Activated T-helper 1 cell treated with anti-CD3 and anti-CD28 coated beads, Interleukin-12 subunit alpha, Interleukin-12 subunit beta, Interleukin-2, Interleukin-4 antibody, amounts not matched to agents 30 ng/mL and 10 ng/mL and 1 ng/mL, durations not matched to agents 14 hours and 24 hours and 36 hours (primary cell): ENCODE measurements at regions of chr3 and their contacts with region 1.

Region 1: DNA sequence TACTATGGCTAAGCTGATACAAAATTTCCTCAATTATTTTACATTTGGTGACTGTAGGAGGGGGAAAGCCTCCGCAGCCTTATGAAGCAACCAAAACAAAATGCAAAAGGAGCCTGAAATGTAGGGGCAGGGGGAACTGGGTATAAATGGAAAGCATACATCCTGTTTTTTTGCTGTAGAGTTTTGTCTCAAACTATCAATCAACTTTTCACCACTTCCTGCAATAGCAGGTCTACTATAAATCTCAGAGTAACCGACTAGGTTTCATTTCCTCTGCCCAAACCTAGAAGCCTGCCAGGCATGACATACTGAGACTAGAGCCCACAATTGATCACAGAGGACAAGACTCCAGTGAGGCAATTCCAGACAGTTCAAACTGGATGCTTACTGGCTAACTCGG is 91.3 kb downstream of the SHQ1 start:
- DNase-seq: peak; percentile 38
- H3K4me3 Mint-ChIP-seq: peak overlapping the region; percentile 34
- H3K27ac Mint-ChIP-seq: peak overlapping the region; percentile 64
- H3K4me1 Mint-ChIP-seq: peaks cover 50% of the 10 kb centered on the region
- H3K27me3 Mint-ChIP-seq: no peaks in the 10 kb centered on the region

Region 2: DNA sequence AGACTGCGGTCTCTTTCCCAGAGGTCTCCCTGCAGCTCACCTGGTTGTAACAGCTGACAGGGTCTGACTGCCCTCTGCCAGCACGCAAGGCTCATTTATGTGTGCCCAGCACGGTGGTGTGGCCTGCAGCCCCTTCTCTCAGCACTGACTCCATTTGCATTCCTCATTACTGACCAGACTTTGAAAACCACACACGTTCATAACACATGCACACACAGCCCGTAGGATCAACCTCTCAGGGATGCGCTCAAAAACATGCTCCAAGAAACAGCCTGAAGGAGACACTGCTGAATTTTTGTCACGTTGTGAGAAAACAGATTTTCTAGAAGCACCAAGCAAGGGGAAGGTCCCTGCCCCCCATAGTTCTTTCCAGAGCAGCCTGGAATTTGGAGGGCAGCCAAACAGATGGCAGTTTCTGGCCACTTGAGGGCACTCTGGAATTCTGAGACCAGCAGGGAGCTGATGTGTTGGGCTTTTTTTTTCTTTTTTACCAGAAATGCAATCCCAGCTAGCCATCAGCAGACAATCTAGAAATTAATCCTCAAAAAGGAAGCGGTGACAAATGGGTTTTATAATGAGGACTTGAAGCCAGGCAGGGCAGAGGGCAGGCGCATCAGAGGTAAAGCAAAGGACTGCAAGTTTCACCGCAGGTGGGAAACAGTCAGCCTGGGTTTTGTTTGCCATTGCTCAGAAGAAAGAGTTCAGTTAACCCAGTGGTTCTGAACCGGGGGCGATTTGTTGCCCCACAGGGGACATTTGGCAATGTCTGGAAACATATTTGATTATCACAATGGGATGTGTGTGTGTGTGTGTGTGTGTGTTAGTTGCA is 801.4 kb before region 1 on chr3:
- intact Hi-C with region 1: loop called (anchors 5 kb)
- DNase-seq: no peak
- H3K4me3 Mint-ChIP-seq: no peak overlapping the region
- H3K27ac Mint-ChIP-seq: no peak overlapping the region
- H3K4me1 Mint-ChIP-seq: peaks cover 33% of the 10 kb centered on the region
- H3K27me3 Mint-ChIP-seq: no peaks in the 10 kb centered on the region

Region 3: DNA sequence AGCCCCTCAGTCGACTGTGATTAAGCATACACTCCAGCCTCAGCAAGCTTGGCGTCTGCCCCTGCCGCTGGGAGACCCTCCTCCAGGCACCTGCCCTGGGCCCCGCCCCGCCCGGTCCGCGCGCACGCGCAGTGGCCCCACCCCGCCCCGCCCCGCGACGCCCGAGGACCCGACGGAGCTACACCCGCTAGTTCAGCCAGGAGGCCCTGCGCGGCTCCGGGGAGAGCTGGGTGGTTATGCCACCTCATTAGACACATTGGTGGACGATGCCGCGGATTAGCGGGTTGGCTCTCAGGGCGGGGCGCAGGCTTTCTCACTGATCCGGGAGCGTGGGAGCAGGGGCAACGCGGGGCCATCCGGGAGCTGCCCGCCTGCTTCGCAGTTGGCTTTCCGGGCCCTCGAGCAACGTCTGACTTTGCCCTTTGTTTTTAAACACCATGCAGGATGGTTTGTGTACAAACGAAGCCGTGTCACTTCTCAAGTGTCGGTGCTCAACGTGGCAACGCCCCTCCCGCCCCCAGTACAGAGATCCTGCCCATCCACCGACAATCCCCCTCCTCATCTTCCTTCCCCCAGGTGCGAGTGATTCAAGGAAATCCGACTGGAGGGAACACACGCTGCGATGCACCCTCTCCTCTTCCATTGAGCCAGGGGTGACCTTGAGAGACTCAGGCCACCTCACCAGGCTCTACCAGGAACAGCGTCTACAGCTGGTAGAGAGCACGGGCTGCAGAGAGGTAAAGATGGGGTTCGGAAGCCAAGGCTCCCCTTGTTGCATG is 18.0 kb before region 1 on chr3:
- intact Hi-C with region 1: loop called (anchors 1 kb)
- DNase-seq: peak; percentile 61
- H3K4me3 Mint-ChIP-seq: peak overlapping the region; percentile 81
- H3K27ac Mint-ChIP-seq: peak overlapping the region; percentile 64
- H3K4me1 Mint-ChIP-seq: peaks cover 19% of the 10 kb centered on the region
- H3K27me3 Mint-ChIP-seq: no peaks in the 10 kb centered on the region

Region 4: GRCh38 chr3:72862314-72863090 is 105.6 kb after region 1 on chr3:
- intact Hi-C with region 1: no loop called
- DNase-seq: no peak
- H3K4me3 Mint-ChIP-seq: no peak overlapping the region
- H3K27ac Mint-ChIP-seq: no peak overlapping the region
- H3K4me1 Mint-ChIP-seq: no peaks in the 10 kb centered on the region
- H3K27me3 Mint-ChIP-seq: peaks cover 3% of the 10 kb centered on the region

Region 5: GRCh38 chr3:73086071-73086494 is 329.2 kb after region 1 on chr3:
- intact Hi-C with region 1: no loop called
- DNase-seq: peak; percentile 16
- H3K4me3 Mint-ChIP-seq: no peak overlapping the region
- H3K27ac Mint-ChIP-seq: no peak overlapping the region
- H3K4me1 Mint-ChIP-seq: peaks cover 9% of the 10 kb centered on the region
- H3K27me3 Mint-ChIP-seq: peaks cover 5% of the 10 kb centered on the region